ENCODE measurements at regions of chr13 and their contacts with region 1.

Region 1: GRCh38 chr13:51729866-51730546 is 74.0 kb downstream of the DHRS12 start:
- DNase-seq: no peak

Region 2: DNA sequence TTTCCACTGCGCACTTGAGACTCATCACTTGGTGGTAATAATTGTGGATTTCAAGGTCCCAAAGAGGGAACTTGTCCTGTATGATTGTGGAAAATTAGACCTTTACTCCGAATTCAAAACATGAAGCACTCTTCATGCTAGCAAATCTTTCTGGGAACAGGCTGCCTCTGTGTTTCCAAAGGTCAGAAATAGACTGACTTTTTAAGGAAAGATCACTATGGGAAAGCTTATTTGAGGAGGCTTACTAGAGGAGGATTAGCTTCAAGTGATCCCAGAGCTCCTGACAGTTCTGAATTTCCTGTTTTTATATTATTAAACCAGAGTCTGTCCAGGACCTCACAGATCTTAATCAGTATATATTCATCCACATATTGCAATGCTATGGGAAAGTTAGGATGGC is 140.2 kb before region 1 on chr13:
- intact Hi-C with region 1: loop called (anchors 2 kb)
- DNase-seq: no peak

Region 3: GRCh38 chr13:51619614-51620013 is 110.4 kb before region 1 on chr13:
- intact Hi-C with region 1: loop called (anchors 5 kb)
- DNase-seq: no peak

Region 4: GRCh38 chr13:51832471-51833152 is 102.6 kb after region 1 on chr13:
- intact Hi-C with region 1: no loop called
- DNase-seq: peak in 2 of 10 donors; percentile 20 to 22

Region 5: GRCh38 chr13:51874651-51875050 is 144.6 kb after region 1 on chr13:
- intact Hi-C with region 1: no loop called
- DNase-seq: peak in 3 of 10 donors; percentile 10 to 77 (median 21)

Region 6: DNA sequence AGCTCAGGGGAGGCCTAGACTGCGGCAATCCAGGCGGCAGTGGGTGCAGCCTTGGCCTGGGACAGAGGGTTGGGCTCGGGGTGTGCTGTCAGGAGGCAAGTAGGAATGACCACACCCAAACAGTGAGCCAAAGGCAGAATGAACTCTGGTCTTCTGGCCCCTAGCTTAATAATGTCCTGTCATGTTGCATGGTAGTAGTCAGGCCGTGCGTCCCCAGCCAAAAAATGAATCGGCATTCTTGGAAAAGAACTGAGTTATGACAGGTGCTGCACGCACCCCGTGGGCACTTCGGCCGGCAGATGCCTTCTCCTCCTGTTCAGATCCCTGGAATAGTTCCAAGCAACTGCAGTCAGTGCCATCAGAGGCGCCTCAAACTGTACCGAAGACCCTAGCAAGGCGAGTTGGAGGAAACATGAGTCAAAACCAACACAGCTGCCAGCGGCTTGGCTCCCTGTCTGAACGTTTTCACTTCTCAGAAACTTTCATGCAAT is 225.3 kb after region 1 on chr13:
- intact Hi-C with region 1: no loop called
- DNase-seq: peak in 1 of 10 donors; percentile 77